Calu3 (cell line): ENCODE measurements at regions of chr1 and their contacts with region 1.

Region 1: DNA sequence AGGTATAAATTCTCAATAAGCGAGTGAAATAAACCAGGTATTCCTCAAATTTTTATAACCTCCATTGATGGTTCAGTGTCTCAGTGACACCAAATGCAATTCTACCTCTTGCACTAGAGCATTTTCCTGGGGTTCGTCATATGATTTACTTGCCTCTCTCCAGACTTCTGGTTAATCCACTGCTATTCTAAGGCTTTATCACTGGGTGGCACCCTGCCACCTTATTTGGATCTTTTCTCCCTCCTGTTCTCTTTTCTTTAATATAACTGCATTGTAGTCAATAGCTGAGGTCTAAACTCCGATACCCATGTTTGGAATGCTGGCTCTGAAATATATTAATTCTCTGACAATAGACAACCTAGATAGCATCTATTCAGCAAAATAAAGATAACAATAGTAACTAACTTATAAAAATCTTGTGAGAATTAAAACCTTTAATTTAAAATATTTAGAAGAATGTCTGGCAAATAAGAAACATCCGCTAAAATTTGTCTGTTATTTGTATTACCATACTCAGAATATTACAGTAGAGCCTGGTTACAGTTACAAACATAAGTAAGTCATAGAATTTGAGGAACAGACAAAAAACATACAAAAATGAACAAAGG is 436.4 kb downstream of the PLA2G4A start:
- DNase-seq: peak; percentile 70
- H3K4me3 Mint-ChIP-seq: no peak overlapping the region
- H3K27ac Mint-ChIP-seq: no peak overlapping the region
- H3K4me1 Mint-ChIP-seq: peaks cover 9% of the 10 kb centered on the region
- H3K27me3 Mint-ChIP-seq: no peaks in the 10 kb centered on the region
- CTCF ChIP-seq: peak; percentile 34

Region 2: GRCh38 chr1:187051618-187052232 is 213.4 kb before region 1 on chr1:
- CTCF ChIA-PET with region 1: interaction called, 5 read pairs
- intact Hi-C with region 1: loop called (anchors 2 kb)
- DNase-seq: peak; percentile 61
- H3K4me3 Mint-ChIP-seq: no peak overlapping the region
- H3K27ac Mint-ChIP-seq: no peak overlapping the region
- H3K4me1 Mint-ChIP-seq: peaks cover 13% of the 10 kb centered on the region
- H3K27me3 Mint-ChIP-seq: no peaks in the 10 kb centered on the region
- CTCF ChIP-seq: peak; percentile 40

Region 3: DNA sequence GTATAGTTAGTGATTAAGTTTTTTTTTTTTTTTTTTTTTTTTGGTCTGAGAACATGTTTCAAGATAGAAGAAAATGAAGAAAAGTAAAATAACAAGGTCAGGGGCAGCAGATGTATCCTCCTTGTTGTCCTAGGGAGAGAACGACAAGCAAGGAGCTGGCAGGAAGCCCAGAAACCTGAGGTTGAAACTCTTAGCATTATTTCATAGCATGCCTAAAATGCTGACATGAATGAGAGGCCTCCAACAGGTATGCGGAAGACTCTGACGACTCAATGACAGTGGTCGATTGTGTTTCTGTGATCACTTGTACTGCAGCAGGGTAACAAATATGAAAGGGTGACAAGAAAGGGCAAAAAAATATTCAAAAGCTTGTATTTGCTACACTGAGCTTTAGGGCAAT is 20.5 kb before region 1 on chr1:
- CTCF ChIA-PET with region 1: no interaction called
- intact Hi-C with region 1: no loop called
- DNase-seq: peak; percentile 65
- H3K4me3 Mint-ChIP-seq: no peak overlapping the region
- H3K27ac Mint-ChIP-seq: peak overlapping the region; percentile 15
- H3K4me1 Mint-ChIP-seq: no peaks in the 10 kb centered on the region
- H3K27me3 Mint-ChIP-seq: no peaks in the 10 kb centered on the region
- CTCF ChIP-seq: no peak

Region 4: GRCh38 chr1:187396226-187396625 is 131.1 kb after region 1 on chr1:
- CTCF ChIA-PET with region 1: no interaction called
- intact Hi-C with region 1: loop called (anchors 5 kb)
- DNase-seq: no peak
- H3K4me3 Mint-ChIP-seq: no peak overlapping the region
- H3K27ac Mint-ChIP-seq: no peak overlapping the region
- H3K4me1 Mint-ChIP-seq: no peaks in the 10 kb centered on the region
- H3K27me3 Mint-ChIP-seq: no peaks in the 10 kb centered on the region
- CTCF ChIP-seq: no peak

Region 5: GRCh38 chr1:187476671-187477070 is 211.6 kb after region 1 on chr1:
- CTCF ChIA-PET with region 1: no interaction called
- intact Hi-C with region 1: loop called (anchors 2 kb)
- DNase-seq: no peak
- H3K4me3 Mint-ChIP-seq: no peak overlapping the region
- H3K27ac Mint-ChIP-seq: no peak overlapping the region
- H3K4me1 Mint-ChIP-seq: peaks cover 8% of the 10 kb centered on the region
- H3K27me3 Mint-ChIP-seq: no peaks in the 10 kb centered on the region
- CTCF ChIP-seq: no peak

Region 6: GRCh38 chr1:187689129-187689528 is 424.0 kb after region 1 on chr1:
- CTCF ChIA-PET with region 1: no interaction called
- intact Hi-C with region 1: loop called (anchors 10 kb)
- DNase-seq: peak; percentile 7
- H3K4me3 Mint-ChIP-seq: no peak overlapping the region
- H3K27ac Mint-ChIP-seq: peak overlapping the region; percentile 72
- H3K4me1 Mint-ChIP-seq: peaks cover 69% of the 10 kb centered on the region
- H3K27me3 Mint-ChIP-seq: no peaks in the 10 kb centered on the region
- CTCF ChIP-seq: no peak

Region 7: DNA sequence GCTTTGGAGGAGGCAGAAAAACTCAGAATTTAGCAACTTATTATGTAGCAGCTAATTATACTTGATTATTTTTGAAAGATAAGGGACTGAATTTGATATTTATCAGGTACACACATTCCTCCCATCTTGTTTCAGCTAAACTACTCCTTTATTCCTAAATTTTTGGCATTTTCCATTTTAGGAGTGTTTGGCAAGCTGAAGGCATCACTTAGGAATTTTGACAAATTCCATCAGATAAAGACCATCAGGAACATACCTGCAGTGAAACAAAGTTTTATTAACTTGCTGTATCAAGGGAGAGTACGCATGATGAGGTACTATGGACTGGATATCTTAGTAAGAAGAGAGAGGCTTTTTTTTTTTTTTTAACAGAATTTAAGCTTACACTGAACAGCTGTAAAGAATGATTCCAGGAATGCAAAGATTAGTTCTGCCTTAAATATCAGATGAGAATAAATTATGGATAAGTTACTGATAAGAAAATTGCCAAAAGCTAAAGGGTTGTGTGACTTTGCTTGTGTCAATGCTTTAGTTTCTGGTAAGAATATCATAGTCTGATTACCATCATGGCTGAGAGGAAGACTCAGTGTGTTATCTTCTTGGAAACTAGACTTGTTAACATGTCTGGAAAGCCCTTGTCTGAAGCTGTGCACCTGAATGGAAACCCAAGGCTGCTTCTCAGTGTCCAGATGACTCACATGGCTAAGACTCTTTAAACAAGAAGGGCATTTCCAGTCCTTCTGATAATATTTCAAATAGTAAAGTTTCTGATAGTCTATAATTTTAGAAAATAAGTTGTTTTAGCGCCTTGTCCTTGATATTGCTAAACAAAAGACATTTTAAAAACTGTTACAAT is 656.1 kb after region 1 on chr1:
- CTCF ChIA-PET with region 1: no interaction called
- intact Hi-C with region 1: loop called (anchors 5 kb)
- DNase-seq: no peak
- H3K4me3 Mint-ChIP-seq: no peak overlapping the region
- H3K27ac Mint-ChIP-seq: no peak overlapping the region
- H3K4me1 Mint-ChIP-seq: peaks cover 13% of the 10 kb centered on the region
- H3K27me3 Mint-ChIP-seq: no peaks in the 10 kb centered on the region
- CTCF ChIP-seq: no peak

Region 8: DNA sequence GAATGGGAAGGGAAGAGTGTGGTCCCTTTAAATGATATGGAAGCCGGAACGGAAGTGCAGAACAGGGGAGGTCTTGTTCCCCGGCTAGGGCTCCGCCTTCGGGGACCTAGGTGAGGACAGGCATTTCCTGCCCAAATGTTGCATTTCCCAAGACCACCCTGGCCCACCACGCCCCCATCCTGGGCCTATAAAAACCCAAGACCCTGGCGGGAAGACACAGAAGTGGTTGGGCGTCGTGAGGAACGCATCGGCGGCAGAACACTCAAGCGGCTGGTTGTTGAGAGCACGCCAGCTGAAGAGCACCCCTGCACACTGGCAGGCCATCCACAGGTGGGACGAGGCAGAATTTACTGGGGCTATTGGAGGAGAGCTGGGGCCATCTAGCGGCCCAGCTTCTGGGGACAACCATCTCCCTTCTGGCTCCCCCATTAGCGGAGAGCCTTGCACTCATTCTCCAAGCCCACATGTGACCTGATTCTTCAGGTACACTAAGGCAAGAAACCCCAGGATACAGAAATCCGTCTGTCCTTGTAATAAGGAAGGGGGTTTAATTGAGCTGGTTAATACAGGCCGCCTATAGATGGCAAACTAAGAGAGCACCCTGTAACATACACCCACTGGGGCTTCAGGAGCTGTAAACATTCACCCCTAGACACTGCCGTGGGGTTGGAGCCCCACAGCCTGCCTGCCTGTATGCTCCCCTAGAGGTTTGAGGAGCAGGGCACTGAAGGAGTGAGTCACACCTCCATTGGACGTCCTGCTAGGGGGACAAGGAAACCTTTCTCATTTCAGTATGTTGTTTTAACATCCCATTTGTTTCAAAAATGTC is 1884.7 kb after region 1 on chr1:
- CTCF ChIA-PET with region 1: no interaction called
- intact Hi-C with region 1: loop called (anchors 5 kb)
- DNase-seq: peak; percentile 86
- H3K4me3 Mint-ChIP-seq: peak overlapping the region; percentile 88
- H3K27ac Mint-ChIP-seq: peak overlapping the region; percentile 89
- H3K4me1 Mint-ChIP-seq: peaks cover 19% of the 10 kb centered on the region
- H3K27me3 Mint-ChIP-seq: no peaks in the 10 kb centered on the region
- CTCF ChIP-seq: peak; percentile 75